ENCODE measurements at regions of chr3 and their contacts with region 1.

Region 1: GRCh38 chr3:133377396-133377795 is 22.5 kb upstream of the BFSP2 start:
- DNase-seq: peak; percentile 39 to 68 (median 62)
- H3K4me3 ChIP-seq: no peak overlapping the region
- H3K27ac ChIP-seq: no peak overlapping the region
- H3K4me1 ChIP-seq: no peaks in the 10 kb centered on the region
- H3K27me3 ChIP-seq: peaks cover 0 to 7% (median 0%) of the 10 kb centered on the region in 5 experiments

Region 2: GRCh38 chr3:132730891-132731580 is 646.4 kb before region 1 on chr3:
- CTCF ChIA-PET with region 1: interaction called, 55 read pairs
- POLR2A ChIA-PET with region 1: no interaction called
- DNase-seq: peak; percentile 49 to 66 (median 52)
- H3K4me3 ChIP-seq: no peak overlapping the region
- H3K27ac ChIP-seq: no peak overlapping the region
- H3K4me1 ChIP-seq: no peaks in the 10 kb centered on the region
- H3K27me3 ChIP-seq: peaks cover 0 to 2% (median 0%) of the 10 kb centered on the region in 5 experiments

Region 3: GRCh38 chr3:133040696-133041523 is 336.5 kb before region 1 on chr3:
- CTCF ChIA-PET with region 1: interaction called, 51 read pairs
- POLR2A ChIA-PET with region 1: no interaction called
- DNase-seq: peak; percentile 52 to 74 (median 66)
- H3K4me3 ChIP-seq: no peak overlapping the region
- H3K27ac ChIP-seq: no peak overlapping the region
- H3K4me1 ChIP-seq: peaks cover 0 to 16% (median 12%) of the 10 kb centered on the region in 4 experiments
- H3K27me3 ChIP-seq: peaks cover 9 to 52% (median 30%) of the 10 kb centered on the region in 5 experiments

Region 4: GRCh38 chr3:133362539-133362938 is 14.9 kb before region 1 on chr3:
- CTCF ChIA-PET with region 1: interaction called, 12 read pairs
- POLR2A ChIA-PET with region 1: no interaction called
- DNase-seq: no peak
- H3K4me3 ChIP-seq: no peak overlapping the region
- H3K27ac ChIP-seq: no peak overlapping the region
- H3K4me1 ChIP-seq: peaks cover 0 to 5% (median 2%) of the 10 kb centered on the region in 4 experiments
- H3K27me3 ChIP-seq: peaks cover 0 to 2% (median 0%) of the 10 kb centered on the region in 5 experiments

Region 5: DNA sequence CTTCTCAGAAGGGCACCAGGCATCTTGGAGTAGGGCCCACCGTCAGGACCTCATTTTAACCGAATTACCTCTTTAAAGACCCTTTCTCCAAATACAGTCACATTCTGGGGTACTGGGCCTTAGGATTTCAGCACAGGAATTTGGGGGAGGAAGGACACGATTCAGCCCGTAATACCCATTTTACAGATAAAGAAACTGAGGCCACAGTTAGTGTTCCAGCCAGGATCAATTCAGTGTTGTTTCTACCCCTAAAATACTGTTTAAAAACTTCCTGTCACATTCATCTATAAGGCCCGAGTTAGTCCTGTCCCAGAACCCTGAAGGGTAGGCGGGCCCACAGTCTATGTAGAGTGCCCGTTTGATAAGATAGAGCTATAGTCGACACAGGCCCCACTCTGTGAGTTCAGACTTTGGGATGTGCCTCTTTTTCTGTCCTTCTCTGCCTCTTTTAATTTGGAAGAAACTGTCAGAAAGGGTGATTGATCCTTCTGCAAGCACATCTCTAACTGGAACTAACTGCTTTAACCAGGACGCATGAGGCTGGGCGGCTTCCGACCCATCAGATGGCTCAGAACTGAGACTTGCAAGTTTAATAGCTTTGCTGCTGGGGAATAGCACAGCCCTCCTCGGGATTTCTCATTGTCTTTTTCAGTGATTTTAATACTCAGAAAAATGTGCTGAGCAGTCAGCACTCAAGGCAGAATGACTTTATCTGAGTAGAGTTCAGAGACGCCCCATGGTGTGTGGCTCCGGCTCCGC is 41.9 kb after region 1 on chr3:
- CTCF ChIA-PET with region 1: no interaction called
- POLR2A ChIA-PET with region 1: no interaction called
- DNase-seq: no peak
- H3K4me3 ChIP-seq: no peak overlapping the region
- H3K27ac ChIP-seq: no peak overlapping the region
- H3K4me1 ChIP-seq: peaks cover 0 to 1% (median 0%) of the 10 kb centered on the region in 4 experiments
- H3K27me3 ChIP-seq: peaks cover 0 to 5% (median 0%) of the 10 kb centered on the region in 5 experiments